ENCODE measurements at regions of chr12 and their contacts with region 1.

Region 1: GRCh38 chr12:34022079-34022830 is at the start of gene ALG10:
- DNase-seq: peak; percentile 98 to 99
- H3K4me3 ChIP-seq: peak within 1 kb of the TSS; percentile 64
- H3K4me3 Mint-ChIP-seq: peak within 1 kb of the TSS; percentile 96
- H3K27ac Mint-ChIP-seq: peak within 1 kb of the TSS; percentile 98
- H3K4me1 ChIP-seq: peaks cover 3% of the 10 kb centered on the region; the same call in 1 of the 2 replicates
- H3K4me1 Mint-ChIP-seq: no peaks in the 10 kb centered on the region
- H3K27me3 ChIP-seq: no peaks in the 10 kb centered on the region
- H3K27me3 Mint-ChIP-seq: no peaks in the 10 kb centered on the region
- CTCF ChIP-seq: peak; percentile 78 to 89
- total RNA-seq, gene ALG10: 14.7 and 18.8 TPM in 2 replicates

Region 2: GRCh38 chr12:32679091-32679919 is 1343.0 kb before region 1 on chr12 and contains the start of gene DNM1L:
- CTCF ChIA-PET with region 1: no interaction called
- POLR2A ChIA-PET with region 1: no interaction called
- intact Hi-C with region 1: loop called (anchors 10 kb)
- DNase-seq: peak; percentile 99
- H3K4me3 ChIP-seq: peak within 1 kb of the TSS; percentile 86
- H3K4me3 Mint-ChIP-seq: peak within 1 kb of the TSS; percentile 97
- H3K27ac Mint-ChIP-seq: peak within 1 kb of the TSS; percentile 95
- H3K4me1 ChIP-seq: peaks cover 22% of the 10 kb centered on the region
- H3K4me1 Mint-ChIP-seq: peaks cover 19% of the 10 kb centered on the region
- H3K27me3 ChIP-seq: no peaks in the 10 kb centered on the region
- H3K27me3 Mint-ChIP-seq: no peaks in the 10 kb centered on the region
- CTCF ChIP-seq: peak in 1 of 2 experiments; percentile 18
- total RNA-seq, gene DNM1L: 136 and 137 TPM in 2 replicates

Region 3: GRCh38 chr12:33427072-33427471 is 595.2 kb before region 1 on chr12:
- CTCF ChIA-PET with region 1: no interaction called
- POLR2A ChIA-PET with region 1: no interaction called
- intact Hi-C with region 1: loop called (anchors 1 kb)
- DNase-seq: peak in 1 of 2 experiments; percentile 40
- H3K4me3 ChIP-seq: no peak overlapping the region
- H3K4me3 Mint-ChIP-seq: no peak overlapping the region
- H3K27ac Mint-ChIP-seq: no peak overlapping the region
- H3K4me1 ChIP-seq: no peaks in the 10 kb centered on the region
- H3K4me1 Mint-ChIP-seq: no peaks in the 10 kb centered on the region
- H3K27me3 ChIP-seq: no peaks in the 10 kb centered on the region
- H3K27me3 Mint-ChIP-seq: peaks cover 6% of the 10 kb centered on the region
- CTCF ChIP-seq: peak; percentile 24 to 25

Region 4: GRCh38 chr12:33575346-33575745 is 446.9 kb before region 1 on chr12:
- CTCF ChIA-PET with region 1: no interaction called
- POLR2A ChIA-PET with region 1: no interaction called
- intact Hi-C with region 1: no loop called
- DNase-seq: no peak
- H3K4me3 ChIP-seq: no peak overlapping the region
- H3K4me3 Mint-ChIP-seq: no peak overlapping the region
- H3K27ac Mint-ChIP-seq: no peak overlapping the region
- H3K4me1 ChIP-seq: no peaks in the 10 kb centered on the region
- H3K4me1 Mint-ChIP-seq: no peaks in the 10 kb centered on the region
- H3K27me3 ChIP-seq: no peaks in the 10 kb centered on the region
- H3K27me3 Mint-ChIP-seq: no peaks in the 10 kb centered on the region
- CTCF ChIP-seq: no peak

Region 5: DNA sequence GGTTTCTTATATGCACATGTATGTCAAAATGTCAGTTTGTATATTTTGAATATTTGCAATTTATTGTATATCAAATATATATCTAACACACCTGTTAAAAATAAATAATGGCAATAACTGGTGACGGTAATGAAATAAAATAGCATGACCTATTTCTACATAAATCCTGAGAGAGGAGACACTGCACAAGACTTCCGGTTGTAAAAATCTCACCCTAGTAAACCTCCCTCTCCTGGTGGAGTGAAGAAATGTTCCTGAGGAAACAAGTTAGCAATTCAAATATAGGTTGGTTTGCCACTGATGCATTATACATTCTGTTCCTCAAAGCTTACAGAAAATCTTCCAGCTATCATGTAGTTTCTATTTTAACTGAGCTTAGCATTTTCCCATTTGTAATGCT is 416.5 kb before region 1 on chr12:
- CTCF ChIA-PET with region 1: interaction called, 8 read pairs
- POLR2A ChIA-PET with region 1: no interaction called
- intact Hi-C with region 1: loop called (anchors 5 kb)
- DNase-seq: peak in 1 of 2 experiments; percentile 43
- H3K4me3 ChIP-seq: no peak overlapping the region
- H3K4me3 Mint-ChIP-seq: no peak overlapping the region
- H3K27ac Mint-ChIP-seq: no peak overlapping the region
- H3K4me1 ChIP-seq: no peaks in the 10 kb centered on the region
- H3K4me1 Mint-ChIP-seq: no peaks in the 10 kb centered on the region
- H3K27me3 ChIP-seq: no peaks in the 10 kb centered on the region
- H3K27me3 Mint-ChIP-seq: peaks cover 11% of the 10 kb centered on the region
- CTCF ChIP-seq: peak; percentile 56 to 62

Region 6: DNA sequence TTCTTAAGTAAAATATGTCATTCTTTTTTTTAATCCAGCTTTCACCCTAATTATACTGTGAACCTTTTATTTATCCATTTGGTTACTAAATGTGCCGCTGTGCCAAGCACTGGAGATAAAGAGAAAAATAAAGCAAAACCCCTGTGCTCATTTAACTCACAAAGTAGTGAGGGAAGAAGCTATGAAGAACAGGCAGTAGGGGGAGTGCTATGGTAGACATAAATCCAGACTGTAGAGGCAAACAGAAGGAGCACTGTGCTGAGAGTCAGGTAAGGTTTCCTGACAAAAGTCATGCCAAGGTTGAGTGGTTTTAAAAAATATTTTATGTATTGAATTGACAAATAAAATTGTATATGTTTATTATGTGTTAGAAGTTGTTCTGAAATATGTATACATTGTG is 394.2 kb before region 1 on chr12:
- CTCF ChIA-PET with region 1: no interaction called
- POLR2A ChIA-PET with region 1: no interaction called
- intact Hi-C with region 1: loop called (anchors 5 kb)
- DNase-seq: peak in 1 of 2 experiments; percentile 13
- H3K4me3 ChIP-seq: no peak overlapping the region
- H3K4me3 Mint-ChIP-seq: no peak overlapping the region
- H3K27ac Mint-ChIP-seq: no peak overlapping the region
- H3K4me1 ChIP-seq: no peaks in the 10 kb centered on the region
- H3K4me1 Mint-ChIP-seq: no peaks in the 10 kb centered on the region
- H3K27me3 ChIP-seq: no peaks in the 10 kb centered on the region
- H3K27me3 Mint-ChIP-seq: peaks cover 11% of the 10 kb centered on the region
- CTCF ChIP-seq: peak in 1 of 2 experiments; percentile 31

Region 7: DNA sequence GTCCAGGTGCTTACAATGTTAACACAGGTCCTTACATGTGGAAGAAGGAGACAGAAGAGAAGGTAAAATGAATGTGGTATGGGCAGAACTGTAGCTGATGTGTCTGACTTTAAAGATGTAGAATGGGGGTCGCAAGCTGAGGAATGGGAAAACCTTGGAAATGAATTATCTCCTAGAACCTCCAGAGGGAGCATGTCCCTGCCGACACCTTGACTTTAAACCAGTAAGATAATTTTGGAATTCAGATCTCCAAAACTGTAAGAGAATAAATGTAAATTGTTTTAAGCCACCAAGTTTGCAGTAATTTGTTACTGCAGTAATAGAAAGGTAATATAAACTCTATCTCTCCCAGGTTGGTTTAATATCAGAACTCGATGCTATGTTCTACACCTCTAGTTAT is 80.1 kb before region 1 on chr12:
- CTCF ChIA-PET with region 1: interaction called, 3 read pairs
- POLR2A ChIA-PET with region 1: no interaction called
- intact Hi-C with region 1: loop called (anchors 1 kb)
- DNase-seq: no peak
- H3K4me3 ChIP-seq: no peak overlapping the region
- H3K4me3 Mint-ChIP-seq: no peak overlapping the region
- H3K27ac Mint-ChIP-seq: no peak overlapping the region
- H3K4me1 ChIP-seq: peaks cover 23% of the 10 kb centered on the region
- H3K4me1 Mint-ChIP-seq: peaks cover 11% of the 10 kb centered on the region
- H3K27me3 ChIP-seq: no peaks in the 10 kb centered on the region
- H3K27me3 Mint-ChIP-seq: no peaks in the 10 kb centered on the region
- CTCF ChIP-seq: peak; percentile 57 to 62